ENCODE measurements at regions of chr7 and their contacts with region 1.

Region 1: GRCh38 chr7:121994625-121995410 is 121.9 kb downstream of the PTPRZ1 start:
- H3K4me3 ChIP-seq: no peak overlapping the region
- H3K27ac ChIP-seq: no peak overlapping the region
- H3K4me1 ChIP-seq: no peaks in the 10 kb centered on the region
- CTCF ChIP-seq: 0 out of 2 replicates have a peak, but pooled peaks have one; percentile 7

Region 2: DNA sequence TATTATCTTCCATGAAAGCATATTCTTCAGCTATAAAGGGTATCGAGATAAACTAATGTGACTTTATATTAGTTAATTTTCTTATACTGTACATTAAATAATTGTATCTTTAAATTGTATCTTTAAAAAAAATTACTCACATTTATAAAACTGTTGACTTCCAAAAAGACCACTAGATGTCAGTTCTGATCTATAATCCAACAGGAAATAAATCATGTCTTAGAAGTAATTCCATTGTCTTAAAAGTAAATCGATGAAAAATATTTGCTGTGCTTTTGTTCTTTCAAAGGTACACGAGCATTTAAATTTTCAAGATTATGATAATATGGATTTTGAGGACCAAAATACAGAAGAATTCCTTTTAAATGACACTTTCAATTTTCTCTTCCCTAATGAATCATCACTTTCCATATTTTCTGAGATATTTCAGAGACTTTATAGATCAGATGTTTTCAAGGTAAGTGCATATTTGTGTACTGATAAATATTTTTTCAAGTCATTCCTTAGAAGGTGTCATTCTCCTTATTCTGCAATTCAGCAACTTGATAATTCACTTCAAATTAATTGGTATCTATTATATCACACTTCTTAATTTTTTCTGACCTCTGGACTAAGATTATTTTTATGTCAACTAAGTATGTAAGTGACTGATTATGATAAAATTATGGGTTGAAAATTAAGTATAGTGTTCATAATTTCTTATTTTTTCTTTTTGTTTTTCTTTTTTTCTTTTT is 867.9 kb before region 1 on chr7:
- CTCF ChIA-PET with region 1: interaction called, 10 read pairs
- POLR2A ChIA-PET with region 1: no interaction called
- H3K4me3 ChIP-seq: no peak overlapping the region
- H3K27ac ChIP-seq: no peak overlapping the region
- H3K4me1 ChIP-seq: no peaks in the 10 kb centered on the region
- CTCF ChIP-seq: no peak

Region 3: DNA sequence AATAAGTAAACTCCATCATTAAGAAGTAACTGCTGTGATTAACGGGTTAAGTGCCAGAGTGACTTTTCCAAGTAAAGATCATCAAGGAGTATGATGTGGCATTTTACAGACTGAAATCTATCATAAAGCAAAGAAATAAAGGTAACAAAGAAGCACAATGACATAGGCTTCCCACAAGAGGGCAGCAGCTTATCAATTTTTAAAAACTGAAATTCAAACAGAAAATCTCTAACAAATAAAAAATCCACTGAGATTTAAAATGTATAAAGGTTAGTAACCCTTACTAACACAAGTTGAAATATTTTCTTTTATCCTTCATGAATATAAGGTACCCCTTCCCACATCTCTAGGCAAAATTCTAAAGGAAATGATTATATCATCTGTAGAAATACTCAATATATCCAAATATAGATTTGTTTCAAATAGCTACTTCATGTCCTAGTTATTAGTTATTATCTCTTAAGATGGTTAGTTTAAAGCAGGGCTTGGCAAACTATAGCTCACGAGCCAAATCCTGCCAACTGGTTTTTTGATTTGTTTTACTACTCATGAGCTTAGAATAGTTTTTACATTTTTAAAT is 627.9 kb before region 1 on chr7:
- CTCF ChIA-PET with region 1: interaction called, 18 read pairs
- POLR2A ChIA-PET with region 1: no interaction called
- H3K4me3 ChIP-seq: no peak overlapping the region
- H3K27ac ChIP-seq: no peak overlapping the region
- H3K4me1 ChIP-seq: no peaks in the 10 kb centered on the region
- CTCF ChIP-seq: peak; percentile 38; the same call in 1 of the 2 replicates

Region 4: GRCh38 chr7:121605317-121605680 is 389.5 kb before region 1 on chr7:
- CTCF ChIA-PET with region 1: interaction called, 16 read pairs
- POLR2A ChIA-PET with region 1: no interaction called
- H3K4me3 ChIP-seq: no peak overlapping the region
- H3K27ac ChIP-seq: no peak overlapping the region
- H3K4me1 ChIP-seq: no peaks in the 10 kb centered on the region
- CTCF ChIP-seq: no peak

Region 5: DNA sequence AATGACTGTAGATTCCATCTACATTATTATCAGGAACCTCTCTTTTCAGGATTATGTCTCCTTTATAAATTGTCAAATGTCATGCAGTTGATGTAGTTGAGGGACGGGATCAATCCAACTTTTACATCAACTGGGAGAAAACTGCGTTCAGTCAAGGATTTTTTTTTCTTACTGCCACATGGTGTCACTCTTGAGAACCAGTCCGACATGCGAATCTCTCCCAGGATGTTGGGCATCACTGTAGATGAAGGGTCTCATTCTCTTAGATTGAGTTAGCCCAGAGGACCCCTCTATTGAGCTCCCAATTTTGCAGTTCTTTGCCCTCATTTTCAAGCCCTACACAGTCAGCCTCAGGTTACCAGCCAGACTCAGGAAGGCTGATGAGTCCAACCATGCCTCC is 242.1 kb before region 1 on chr7:
- CTCF ChIA-PET with region 1: interaction called, 14 read pairs
- POLR2A ChIA-PET with region 1: no interaction called
- H3K4me3 ChIP-seq: no peak overlapping the region
- H3K27ac ChIP-seq: no peak overlapping the region
- H3K4me1 ChIP-seq: no peaks in the 10 kb centered on the region
- CTCF ChIP-seq: no peak

Region 6: GRCh38 chr7:122006687-122007086 is 11.9 kb after region 1 on chr7:
- CTCF ChIA-PET with region 1: interaction called, 15 read pairs
- POLR2A ChIA-PET with region 1: no interaction called
- H3K4me3 ChIP-seq: no peak overlapping the region
- H3K27ac ChIP-seq: no peak overlapping the region
- H3K4me1 ChIP-seq: no peaks in the 10 kb centered on the region
- CTCF ChIP-seq: no peak